MCF 10A (cell line): ENCODE measurements at regions of chr4 and their contacts with region 1.

Region 1: GRCh38 chr4:173252024-173252935 is 81.9 kb downstream of the HMGB2 start:
- DNase-seq: peak; percentile 98
- H3K4me3 Mint-ChIP-seq: no peak overlapping the region
- H3K27ac Mint-ChIP-seq: peak overlapping the region; percentile 63
- H3K4me1 Mint-ChIP-seq: peaks cover 28% of the 10 kb centered on the region
- H3K27me3 Mint-ChIP-seq: no peaks in the 10 kb centered on the region
- CTCF ChIP-seq: no peak

Region 2: DNA sequence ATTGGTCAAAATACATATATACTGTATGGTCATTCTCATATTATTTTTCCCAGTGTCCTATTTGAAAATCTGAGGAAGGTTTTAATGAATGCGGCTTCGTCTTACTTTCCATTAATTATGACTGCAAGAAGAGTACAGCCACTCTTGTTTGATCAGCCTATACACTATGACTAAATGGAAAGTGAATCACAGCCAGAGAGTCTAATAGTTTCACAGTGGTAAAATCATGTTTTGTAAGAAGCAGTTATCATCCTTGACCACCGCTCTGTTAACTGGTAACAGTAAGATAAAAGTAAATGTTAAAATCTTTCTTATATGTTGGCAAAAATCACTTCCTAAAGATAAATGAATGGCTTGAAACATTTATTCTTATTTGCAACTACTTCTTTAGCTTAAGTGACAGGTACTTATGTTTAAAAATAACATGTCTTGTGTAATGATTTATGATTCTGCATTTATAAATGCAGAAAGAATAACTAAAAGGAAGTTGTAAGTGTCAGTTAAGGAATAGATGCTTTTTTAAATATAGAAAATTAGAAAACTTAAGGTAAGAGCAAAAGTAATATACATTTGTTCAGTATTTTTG is 70.4 kb before region 1 on chr4:
- CTCF ChIA-PET with region 1: interaction called, 10 read pairs
- POLR2A ChIA-PET with region 1: interaction called, 3 read pairs
- intact Hi-C with region 1: loop called (anchors 2 kb)
- DNase-seq: peak; percentile 47
- H3K4me3 Mint-ChIP-seq: no peak overlapping the region
- H3K27ac Mint-ChIP-seq: peak overlapping the region; percentile 31
- H3K4me1 Mint-ChIP-seq: peaks cover 22% of the 10 kb centered on the region
- H3K27me3 Mint-ChIP-seq: no peaks in the 10 kb centered on the region
- CTCF ChIP-seq: no peak

Region 3: DNA sequence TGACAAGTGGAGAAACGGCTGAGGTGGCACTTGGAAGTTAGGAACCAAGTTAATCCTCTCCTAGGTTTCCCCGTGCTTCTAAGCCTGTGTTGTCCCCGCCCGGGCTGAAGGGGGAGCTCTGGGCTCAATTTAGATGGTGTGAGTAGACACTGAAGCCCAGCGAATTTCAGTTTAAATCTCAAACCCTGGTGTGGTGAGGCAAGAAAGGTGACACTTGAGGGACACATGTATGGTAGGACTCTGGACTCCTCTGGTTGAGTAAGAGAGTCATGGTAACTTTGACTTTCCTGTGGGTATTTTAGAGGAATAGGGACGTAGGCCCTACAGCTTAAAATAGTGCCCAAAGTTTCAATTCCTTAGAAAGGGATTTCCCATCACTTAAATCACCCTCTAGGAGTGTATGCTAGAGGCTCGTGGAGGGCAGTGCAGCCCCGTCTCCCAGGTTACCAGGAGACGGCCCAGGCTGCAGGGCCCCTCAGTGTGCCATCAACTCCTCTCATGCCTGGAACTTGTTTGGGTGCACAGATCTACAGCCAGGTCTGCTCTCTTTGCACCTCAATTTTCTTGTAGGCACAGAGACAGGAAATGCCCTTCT is 253.7 kb after region 1 on chr4:
- CTCF ChIA-PET with region 1: no interaction called
- POLR2A ChIA-PET with region 1: no interaction called
- intact Hi-C with region 1: no loop called
- DNase-seq: peak; percentile 60
- H3K4me3 Mint-ChIP-seq: no peak overlapping the region
- H3K27ac Mint-ChIP-seq: no peak overlapping the region
- H3K4me1 Mint-ChIP-seq: no peaks in the 10 kb centered on the region
- H3K27me3 Mint-ChIP-seq: no peaks in the 10 kb centered on the region
- CTCF ChIP-seq: peak; percentile 44

Region 4: DNA sequence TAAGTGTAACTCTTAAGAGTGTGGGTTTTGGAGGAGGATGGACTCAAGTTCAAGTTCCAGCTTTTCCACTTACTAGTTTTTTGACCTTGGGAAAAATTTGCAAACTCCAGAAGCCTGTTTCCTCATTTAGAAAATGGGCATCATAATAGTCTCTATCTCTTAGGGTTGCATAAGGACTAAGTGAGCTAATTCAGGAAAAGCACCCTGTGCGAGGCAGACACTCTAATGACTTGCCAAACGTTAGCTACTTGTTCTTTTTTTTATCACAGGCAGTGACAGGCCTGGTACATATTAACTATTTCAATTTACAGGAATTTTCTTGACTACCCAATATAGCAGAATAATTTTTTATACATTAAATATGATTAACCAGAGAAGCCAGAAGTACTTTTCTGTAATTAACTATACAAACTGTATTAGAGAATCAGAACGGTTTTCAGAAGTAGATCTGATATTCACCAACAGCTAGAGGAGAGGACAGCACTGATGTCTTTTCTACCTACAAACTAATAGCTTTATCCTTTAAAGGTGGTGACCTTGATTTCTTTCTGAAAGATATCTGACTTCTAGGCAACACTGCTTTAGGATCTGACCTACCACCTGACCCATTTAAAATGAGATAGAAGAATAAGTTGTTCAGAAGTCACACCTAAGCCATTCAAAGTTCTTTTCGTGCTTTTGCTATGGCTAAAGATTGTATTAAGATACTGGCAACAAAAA is 417.3 kb after region 1 on chr4:
- CTCF ChIA-PET with region 1: no interaction called
- POLR2A ChIA-PET with region 1: no interaction called
- intact Hi-C with region 1: no loop called
- DNase-seq: no peak
- H3K4me3 Mint-ChIP-seq: no peak overlapping the region
- H3K27ac Mint-ChIP-seq: no peak overlapping the region
- H3K4me1 Mint-ChIP-seq: no peaks in the 10 kb centered on the region
- H3K27me3 Mint-ChIP-seq: peaks cover 47% of the 10 kb centered on the region
- CTCF ChIP-seq: no peak